ENCODE measurements at regions of chr16 and their contacts with region 1.

Region 1: GRCh38 chr16:3971261-3971660 is 90.7 kb upstream of the CREBBP start:
- DNase-seq: peak; percentile 61
- H3K4me3 ChIP-seq: no peak overlapping the region
- H3K27ac ChIP-seq: no peak overlapping the region
- H3K4me1 ChIP-seq: no peaks in the 10 kb centered on the region
- H3K27me3 ChIP-seq: no peaks in the 10 kb centered on the region
- CTCF ChIP-seq: no peak

Region 2: DNA sequence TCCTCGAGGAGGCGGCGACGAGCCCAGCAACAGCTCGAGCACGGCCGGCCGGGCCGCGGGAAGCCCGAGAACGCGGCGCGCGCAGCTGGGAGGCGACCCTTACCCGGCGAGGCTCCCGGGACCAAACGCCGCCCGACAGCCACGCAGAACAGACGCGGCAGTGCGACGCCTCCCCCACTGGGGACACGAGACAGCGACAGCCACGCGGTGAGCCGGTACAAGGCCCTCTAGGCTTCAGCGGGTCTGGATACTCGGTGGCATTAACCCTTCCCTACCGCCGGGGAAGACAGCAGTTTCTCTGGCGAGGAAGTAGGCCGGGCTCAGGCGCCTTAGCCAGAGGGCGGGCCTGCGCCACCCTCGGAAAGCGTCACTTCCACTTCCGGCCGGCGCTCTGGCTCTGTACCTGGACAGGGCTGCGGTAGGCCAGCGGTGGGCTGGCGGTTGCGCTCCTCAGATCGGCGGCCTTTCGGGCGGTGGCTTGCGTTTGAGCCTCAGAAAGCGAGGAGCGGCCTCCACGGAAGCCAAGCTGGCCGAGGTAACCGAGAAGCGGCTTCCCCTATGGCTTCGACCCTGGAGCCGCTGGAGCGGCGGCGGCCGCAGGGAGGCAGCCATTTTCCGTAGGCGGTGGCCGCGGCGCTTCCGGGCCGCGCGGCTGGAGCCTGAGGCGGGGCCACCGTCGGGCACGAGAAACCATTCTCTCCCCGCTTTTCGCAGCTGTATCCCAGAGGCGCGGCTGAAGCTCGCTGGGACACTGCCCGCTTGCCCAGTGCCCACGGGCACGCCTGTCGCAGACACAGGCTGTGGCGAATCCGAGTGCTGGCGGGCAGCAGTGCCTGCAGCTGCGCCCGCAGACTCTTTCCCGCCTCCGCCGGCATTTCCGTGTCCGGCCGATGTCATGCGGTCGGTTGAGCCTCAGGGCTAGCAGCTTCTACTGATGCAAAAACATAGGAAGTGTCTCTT is 665.9 kb before region 1 on chr16 and contains the starts of genes TIGD7 and ZNF75A:
- CTCF ChIA-PET with region 1: no interaction called
- POLR2A ChIA-PET with region 1: no interaction called
- intact Hi-C with region 1: no loop called
- DNase-seq: peak; percentile 78 to 86
- H3K4me3 ChIP-seq: peak within 1 kb of the TSS; percentile 94
- H3K27ac ChIP-seq: peak within 1 kb of the TSS; percentile 73
- H3K4me1 ChIP-seq: peaks cover 6% of the 10 kb centered on the region; the same call in 1 of the 2 replicates
- H3K27me3 ChIP-seq: no peaks in the 10 kb centered on the region
- CTCF ChIP-seq: no peak
- total RNA-seq, gene TIGD7: 8.7 and 10.9 TPM in 2 replicates
- total RNA-seq, gene ZNF75A: 32.2 and 35.2 TPM in 2 replicates

Region 3: DNA sequence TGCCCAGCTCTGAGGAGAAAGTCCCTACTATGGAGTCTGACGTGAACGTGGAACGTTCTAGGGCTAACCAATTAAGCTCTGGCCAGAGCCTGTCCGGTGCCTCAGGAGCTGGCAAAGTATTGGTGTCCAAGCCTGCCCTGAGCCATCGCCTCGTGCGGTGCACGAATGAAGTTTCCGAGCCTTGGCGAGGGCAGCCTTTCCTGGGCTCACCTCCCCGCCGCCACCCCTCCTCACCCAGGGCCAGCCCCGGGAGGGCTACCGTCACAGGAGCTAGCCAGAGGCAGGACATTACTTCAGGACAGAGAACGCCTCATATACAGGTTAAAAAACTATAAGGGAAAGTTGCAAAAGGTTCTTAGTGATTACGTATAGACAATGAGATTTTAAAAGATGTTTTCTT is 230.3 kb before region 1 on chr16:
- CTCF ChIA-PET with region 1: no interaction called
- POLR2A ChIA-PET with region 1: no interaction called
- intact Hi-C with region 1: loop called (anchors 5 kb)
- DNase-seq: no peak
- H3K4me3 ChIP-seq: no peak overlapping the region
- H3K27ac ChIP-seq: no peak overlapping the region
- H3K4me1 ChIP-seq: no peaks in the 10 kb centered on the region
- H3K27me3 ChIP-seq: no peaks in the 10 kb centered on the region
- CTCF ChIP-seq: no peak

Region 4: DNA sequence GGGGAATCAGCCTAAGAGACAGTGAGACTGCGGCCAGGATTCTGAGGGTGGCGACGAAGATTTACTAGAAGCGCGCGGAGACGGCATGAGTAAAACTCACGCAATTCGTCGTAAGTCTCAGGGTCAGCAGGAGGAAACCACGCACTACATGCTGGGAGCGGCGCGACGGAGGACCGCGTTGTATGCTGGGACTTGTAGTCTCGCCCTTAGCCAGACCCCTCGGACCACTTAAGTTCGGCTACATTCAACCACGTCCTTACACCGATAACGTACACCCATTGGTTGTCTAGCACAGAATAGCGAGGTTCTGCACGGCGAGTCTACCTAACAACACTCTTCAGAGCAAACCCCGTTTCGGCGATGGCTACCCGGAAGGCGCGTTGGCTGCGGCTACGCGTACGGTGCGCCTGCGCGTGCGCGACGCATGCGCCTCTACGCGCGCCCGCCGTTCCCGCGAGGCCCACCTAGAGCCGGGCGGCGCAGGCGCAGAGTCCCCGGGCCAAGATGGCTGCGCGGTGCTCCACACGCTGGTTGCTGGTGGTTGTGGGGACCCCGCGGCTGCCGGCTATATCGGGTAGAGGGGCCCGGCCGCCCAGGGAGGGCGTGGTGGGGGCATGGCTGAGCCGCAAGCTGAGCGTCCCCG is 454.2 kb after region 1 on chr16 and contains the start of gene DNAJA3:
- CTCF ChIA-PET with region 1: no interaction called
- POLR2A ChIA-PET with region 1: interaction called, 10 read pairs
- intact Hi-C with region 1: no loop called
- DNase-seq: peak; percentile 85 to 93
- H3K4me3 ChIP-seq: peak within 1 kb of the TSS; percentile 80
- H3K27ac ChIP-seq: peak within 1 kb of the TSS; percentile 95
- H3K4me1 ChIP-seq: peaks cover 12% of the 10 kb centered on the region
- H3K27me3 ChIP-seq: no peaks in the 10 kb centered on the region
- CTCF ChIP-seq: no peak
- total RNA-seq, gene DNAJA3: 58.9 and 66.5 TPM in 2 replicates